ENCODE measurements at regions of chr4 and their contacts with region 1.

Region 1: DNA sequence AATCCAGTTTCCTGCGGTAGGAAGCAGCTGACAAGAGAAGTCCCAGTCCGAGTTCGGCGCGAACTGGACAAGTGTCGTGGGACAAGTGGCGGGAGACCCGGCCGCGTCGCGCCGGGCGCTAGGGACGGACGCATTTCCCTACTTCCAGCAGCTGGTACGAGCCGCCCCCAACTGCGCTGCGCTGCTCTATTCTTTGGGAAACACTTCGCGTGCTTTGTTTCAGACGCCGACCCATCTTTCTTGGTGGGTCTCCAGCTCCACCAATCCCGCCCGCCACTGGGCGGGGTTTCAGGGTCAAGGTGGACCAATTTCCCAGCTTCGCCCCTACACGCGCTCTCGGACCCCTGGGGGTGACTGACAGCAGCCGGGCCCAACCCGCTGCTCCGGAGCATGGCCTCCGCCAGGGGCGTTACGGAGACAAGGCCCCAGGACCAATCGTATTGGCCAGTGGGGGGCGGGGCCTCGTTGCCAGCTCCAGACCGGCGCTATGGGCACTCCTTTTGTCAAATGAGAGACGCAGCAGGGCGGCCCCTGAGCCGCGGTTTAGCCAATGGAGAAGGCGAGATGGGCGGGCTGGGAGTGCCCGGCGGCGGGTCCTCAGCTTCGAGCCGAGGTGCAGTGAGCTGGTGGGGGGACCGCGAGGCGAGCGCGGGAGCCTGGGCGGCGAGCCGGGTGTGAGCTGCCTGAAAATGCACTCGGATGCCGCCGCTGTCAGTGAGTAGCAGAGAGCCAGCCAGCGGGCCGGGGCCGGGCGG is at the start of gene DCUN1D4:
- DNase-seq: peak; percentile 98
- ATAC-seq: peak; percentile 91
- H3K4me3 ChIP-seq: peak within 1 kb of the TSS; percentile 83 to 88 (median 85)
- H3K27ac ChIP-seq: peak within 1 kb of the TSS; percentile 85
- H3K4me1 ChIP-seq: peaks cover 28% of the 10 kb centered on the region
- H3K27me3 ChIP-seq: no peaks in the 10 kb centered on the region; a peak in 1 of 5 replicates
- CTCF ChIP-seq: peak; percentile 52
- EP300 ChIP-seq: no peak
- POLR2A ChIP-seq: peak in 1 of 2 experiments; percentile 71; a peak in 3 of 4 replicates
- RAD21 ChIP-seq: 0 out of 2 replicates have a peak, but pooled peaks have one; percentile 28
- total RNA-seq, gene DCUN1D4: 27.9 and 30.4 TPM in 2 replicates

Region 2: GRCh38 chr4:51853027-51853682 is 10.4 kb after region 1 on chr4:
- CTCF ChIA-PET with region 1: no interaction called
- POLR2A ChIA-PET with region 1: interaction called, 9 read pairs
- in situ Hi-C with region 1: no loop called
- intact Hi-C with region 1: loop called (anchors 1 kb)
- DNase-seq: peak; percentile 71
- ATAC-seq: peak; percentile 98
- H3K4me3 ChIP-seq: peak overlapping the region in 2 of 3 experiments; percentile 24 to 31; a peak in 3 of 6 replicates
- H3K27ac ChIP-seq: peak overlapping the region; percentile 78
- H3K4me1 ChIP-seq: peaks cover 43% of the 10 kb centered on the region
- H3K27me3 ChIP-seq: no peaks in the 10 kb centered on the region
- CTCF ChIP-seq: no peak
- EP300 ChIP-seq: no peak
- POLR2A ChIP-seq: no peak
- RAD21 ChIP-seq: no peak

Region 3: DNA sequence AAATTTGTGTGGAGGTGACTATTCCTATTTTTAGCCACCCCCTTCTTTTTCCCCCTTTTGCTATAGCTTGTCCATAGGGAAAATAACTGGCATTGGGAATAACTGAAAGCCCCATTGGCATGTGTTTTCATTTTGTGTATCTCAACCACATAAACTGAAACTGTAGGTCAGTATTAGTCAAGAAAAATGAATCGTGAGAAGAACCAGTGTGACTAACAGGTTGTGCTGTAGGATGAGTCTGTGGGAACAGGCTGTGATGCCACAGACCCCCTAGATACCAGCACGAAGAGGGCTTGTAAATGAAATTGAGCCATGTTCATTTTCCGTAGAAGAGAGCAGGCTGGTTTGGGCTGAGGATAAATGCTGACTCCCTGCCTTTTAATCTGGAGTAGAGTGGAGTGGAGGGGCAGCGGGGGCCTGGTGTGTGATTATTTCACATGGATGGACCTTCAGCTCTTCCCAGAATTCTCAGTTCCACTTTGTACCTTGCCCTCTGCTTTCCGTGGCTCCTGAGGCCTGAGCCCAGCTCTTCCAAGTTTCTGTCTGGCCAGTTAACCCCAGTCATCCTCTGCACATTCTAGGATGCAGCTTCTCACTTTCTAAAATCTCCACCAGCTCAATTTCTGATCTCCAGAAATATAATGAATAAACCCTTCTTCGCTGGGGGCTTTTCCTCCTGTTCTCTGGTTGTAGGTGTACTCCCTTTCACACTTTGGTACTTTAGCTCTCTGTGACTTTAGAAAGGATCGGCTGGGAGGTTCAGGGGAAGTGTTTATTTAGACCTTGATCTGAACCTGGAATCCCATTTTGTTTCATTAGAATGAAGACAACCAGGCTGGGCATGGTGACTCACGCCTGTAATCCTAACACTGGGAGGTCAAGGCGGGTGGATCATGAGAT is 37.5 kb after region 1 on chr4:
- CTCF ChIA-PET with region 1: no interaction called
- POLR2A ChIA-PET with region 1: interaction called, 15 read pairs
- in situ Hi-C with region 1: loop called (anchors 5 kb)
- intact Hi-C with region 1: loop called (anchors 1 kb)
- DNase-seq: peak; percentile 83
- ATAC-seq: peak; percentile 97
- H3K4me3 ChIP-seq: peak overlapping the region; percentile 15 to 31 (median 23); a peak in 3 of 6 replicates
- H3K27ac ChIP-seq: peak overlapping the region; percentile 97
- H3K4me1 ChIP-seq: peaks cover 19% of the 10 kb centered on the region
- H3K27me3 ChIP-seq: no peaks in the 10 kb centered on the region
- CTCF ChIP-seq: no peak
- EP300 ChIP-seq: peak in 1 of 2 experiments; percentile 18; a peak in 1 of 4 replicates
- POLR2A ChIP-seq: peak; percentile 38 to 63; a peak in 3 of 4 replicates
- RAD21 ChIP-seq: no peak

Region 4: GRCh38 chr4:51885363-51885762 is 42.6 kb after region 1 on chr4:
- CTCF ChIA-PET with region 1: no interaction called
- POLR2A ChIA-PET with region 1: interaction called, 15 read pairs
- in situ Hi-C with region 1: loop called (anchors 5 kb)
- intact Hi-C with region 1: loop called (anchors 1 kb)
- DNase-seq: peak; percentile 44
- ATAC-seq: peak; percentile 58; the same call in 2 of the 3 replicates
- H3K4me3 ChIP-seq: no peak overlapping the region
- H3K27ac ChIP-seq: no peak overlapping the region
- H3K4me1 ChIP-seq: peaks cover 11% of the 10 kb centered on the region
- H3K27me3 ChIP-seq: no peaks in the 10 kb centered on the region
- CTCF ChIP-seq: peak; percentile 62
- EP300 ChIP-seq: no peak
- POLR2A ChIP-seq: no peak
- RAD21 ChIP-seq: no peak

Region 5: GRCh38 chr4:51906167-51906958 is 63.6 kb after region 1 on chr4:
- CTCF ChIA-PET with region 1: no interaction called
- POLR2A ChIA-PET with region 1: interaction called, 6 read pairs
- in situ Hi-C with region 1: no loop called
- intact Hi-C with region 1: loop called (anchors 1 kb)
- DNase-seq: no peak
- ATAC-seq: no peak
- H3K4me3 ChIP-seq: no peak overlapping the region
- H3K27ac ChIP-seq: no peak overlapping the region
- H3K4me1 ChIP-seq: peaks cover 49% of the 10 kb centered on the region
- H3K27me3 ChIP-seq: no peaks in the 10 kb centered on the region
- CTCF ChIP-seq: no peak
- EP300 ChIP-seq: no peak
- POLR2A ChIP-seq: no peak
- RAD21 ChIP-seq: no peak

Region 6: DNA sequence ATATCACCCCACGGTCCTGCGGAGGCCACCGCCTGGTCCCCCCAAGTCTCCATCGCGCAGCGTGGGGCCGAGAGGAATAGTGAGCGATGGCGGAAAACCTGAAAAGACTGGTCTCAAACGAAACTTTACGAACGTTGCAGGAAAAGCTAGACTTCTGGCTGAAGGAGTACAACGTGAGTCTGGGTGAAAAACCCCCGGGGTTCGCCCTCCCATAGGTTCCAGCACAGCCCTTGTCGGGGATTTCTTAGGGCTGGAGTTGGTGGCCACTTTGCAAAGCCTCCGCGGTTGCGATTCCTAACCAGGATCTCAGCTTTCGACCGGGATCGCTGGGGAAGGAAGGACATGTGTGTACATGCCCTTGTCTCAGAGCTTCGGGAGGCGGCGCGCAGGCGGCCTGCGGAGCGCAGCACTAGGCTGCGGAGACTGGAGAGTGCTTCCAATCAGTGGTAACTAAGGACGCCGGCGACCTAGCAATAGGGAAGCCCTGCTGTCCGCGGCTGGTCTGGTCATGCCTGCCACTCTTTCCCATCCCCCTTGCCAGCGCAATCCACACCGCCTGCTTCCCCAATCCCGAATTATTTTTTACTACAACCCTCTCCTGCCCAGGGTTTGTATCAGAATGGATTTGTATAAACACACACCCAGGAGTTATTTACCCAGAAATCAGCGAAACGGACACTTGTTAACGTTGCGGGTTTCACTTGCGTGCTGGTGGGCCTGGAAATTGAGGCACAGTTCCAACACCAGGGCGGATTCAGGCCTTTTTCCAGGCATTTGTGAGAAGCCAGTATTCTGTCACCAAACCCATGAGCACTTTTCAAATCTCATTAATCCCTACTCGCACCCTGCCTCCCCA is 209.1 kb after region 1 on chr4:
- CTCF ChIA-PET with region 1: no interaction called
- POLR2A ChIA-PET with region 1: interaction called, 13 read pairs
- in situ Hi-C with region 1: no loop called
- intact Hi-C with region 1: no loop called
- DNase-seq: peak; percentile 74
- ATAC-seq: peak; percentile 97
- H3K4me3 ChIP-seq: peak overlapping the region; percentile 70 to 86 (median 81)
- H3K27ac ChIP-seq: peak overlapping the region; percentile 64
- H3K4me1 ChIP-seq: peaks cover 21% of the 10 kb centered on the region
- H3K27me3 ChIP-seq: no peaks in the 10 kb centered on the region; a peak in 1 of 5 replicates
- CTCF ChIP-seq: peak; percentile 26; the same call in 1 of the 2 replicates
- EP300 ChIP-seq: no peak
- POLR2A ChIP-seq: peak; percentile 50 to 78; a peak in 3 of 4 replicates
- RAD21 ChIP-seq: no peak

Measured in HepG2 (cell line).